Activated CD4-positive, alpha-beta memory T cell treated with anti-CD3 and anti-CD28 coated beads for 36 hours (primary cell): ENCODE measurements at regions of chr3 and their contacts with region 1.

Region 1: GRCh38 chr3:46629551-46630517 is 17.5 kb downstream of the FAM240A start:
- DNase-seq: peak; percentile 83
- H3K4me3 Mint-ChIP-seq: peak overlapping the region; percentile 40
- H3K27ac Mint-ChIP-seq: peak overlapping the region; percentile 31
- H3K4me1 Mint-ChIP-seq: peaks cover 18% of the 10 kb centered on the region
- H3K27me3 Mint-ChIP-seq: no peaks in the 10 kb centered on the region

Region 2: GRCh38 chr3:46449755-46450552 is 179.9 kb before region 1 on chr3:
- CTCF ChIA-PET with region 1: interaction called, 13 read pairs
- POLR2A ChIA-PET with region 1: no interaction called
- intact Hi-C with region 1: no loop called
- DNase-seq: no peak
- H3K4me3 Mint-ChIP-seq: no peak overlapping the region
- H3K27ac Mint-ChIP-seq: no peak overlapping the region
- H3K4me1 Mint-ChIP-seq: no peaks in the 10 kb centered on the region
- H3K27me3 Mint-ChIP-seq: peaks cover 3% of the 10 kb centered on the region

Region 3: GRCh38 chr3:46496741-46497554 is 132.9 kb before region 1 on chr3:
- CTCF ChIA-PET with region 1: interaction called, 21 read pairs
- POLR2A ChIA-PET with region 1: no interaction called
- intact Hi-C with region 1: no loop called
- DNase-seq: peak; percentile 62
- H3K4me3 Mint-ChIP-seq: no peak overlapping the region
- H3K27ac Mint-ChIP-seq: no peak overlapping the region
- H3K4me1 Mint-ChIP-seq: peaks cover 3% of the 10 kb centered on the region
- H3K27me3 Mint-ChIP-seq: no peaks in the 10 kb centered on the region

Region 4: DNA sequence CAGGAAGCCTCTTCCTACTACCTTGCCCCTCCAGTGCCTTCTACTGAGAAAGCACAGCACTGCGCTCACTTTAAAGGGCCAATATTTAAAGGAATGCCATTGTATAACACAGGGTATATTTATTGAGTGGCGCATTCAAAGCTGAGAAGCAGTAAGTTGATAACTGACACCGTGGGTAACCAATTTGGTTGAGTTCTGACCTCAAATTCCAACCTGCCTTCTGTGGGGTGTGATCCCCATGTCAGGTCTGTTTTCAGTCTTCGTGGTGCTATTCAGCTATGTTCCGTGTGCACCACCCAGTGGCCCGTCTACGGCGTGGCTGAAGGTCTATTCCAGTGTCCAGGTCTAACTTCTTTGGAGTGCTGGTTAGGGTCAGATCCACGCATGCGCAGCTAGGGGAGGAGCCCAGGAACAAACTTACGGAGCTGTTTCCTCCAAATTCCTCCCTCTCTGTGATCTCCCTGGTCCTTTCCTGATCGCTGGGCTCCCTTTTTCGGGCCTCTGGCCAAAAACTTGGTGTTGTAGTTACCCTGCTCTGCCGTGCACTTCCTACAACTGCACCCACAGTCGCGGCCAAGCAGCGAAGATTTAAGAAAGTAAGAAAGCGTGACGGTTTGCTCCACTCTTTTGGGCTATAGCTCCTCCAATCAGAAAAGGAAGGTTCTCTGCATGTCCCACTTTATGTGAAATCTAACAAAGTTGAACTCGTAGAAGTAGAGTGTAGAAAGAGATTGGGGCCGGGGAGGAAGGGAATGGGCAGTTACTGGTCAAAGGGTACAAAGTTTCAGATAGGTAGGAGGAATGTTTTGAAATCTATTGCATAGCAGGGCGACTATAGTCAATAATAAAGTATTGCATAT is 71.4 kb before region 1 on chr3:
- CTCF ChIA-PET with region 1: interaction called, 14 read pairs
- POLR2A ChIA-PET with region 1: no interaction called
- intact Hi-C with region 1: no loop called
- DNase-seq: peak; percentile 78
- H3K4me3 Mint-ChIP-seq: peak overlapping the region; percentile 71
- H3K27ac Mint-ChIP-seq: no peak overlapping the region
- H3K4me1 Mint-ChIP-seq: peaks cover 11% of the 10 kb centered on the region
- H3K27me3 Mint-ChIP-seq: peaks cover 1% of the 10 kb centered on the region

Region 5: DNA sequence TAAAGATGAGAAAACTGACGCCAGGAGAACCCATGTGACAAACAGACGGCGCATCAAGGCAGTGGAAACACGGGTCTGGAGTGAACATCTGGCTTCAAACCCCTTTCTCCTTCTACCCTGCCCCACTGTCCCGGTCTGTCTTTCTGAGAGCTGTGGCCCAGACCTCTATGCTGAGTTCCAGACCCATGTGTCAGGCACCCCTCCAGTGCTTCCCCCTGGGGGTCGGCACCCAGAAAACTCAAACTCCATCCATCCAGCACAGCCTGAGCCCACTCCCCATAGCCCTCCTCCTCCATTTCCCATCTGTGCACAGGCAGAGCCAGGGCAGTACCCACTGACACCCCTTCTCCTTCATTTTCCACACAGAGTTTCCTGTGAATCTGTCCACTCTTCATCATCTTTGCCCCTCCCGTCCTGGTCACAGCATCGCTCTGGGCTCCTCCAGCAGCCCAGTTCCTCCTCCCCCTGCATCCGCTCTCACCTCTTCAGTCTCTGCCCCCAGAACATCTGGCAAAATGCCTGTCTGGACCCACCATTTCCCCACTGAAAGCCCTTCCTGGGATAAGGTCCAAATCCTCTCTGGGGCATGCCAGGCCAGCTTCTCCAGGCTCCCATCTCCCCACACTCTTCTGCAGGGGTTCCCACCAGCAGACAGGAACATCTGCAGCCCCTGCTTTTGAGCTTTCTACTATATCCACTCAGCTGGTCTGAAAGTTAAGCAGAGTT is 14.6 kb before region 1 on chr3:
- CTCF ChIA-PET with region 1: interaction called, 10 read pairs
- POLR2A ChIA-PET with region 1: no interaction called
- intact Hi-C with region 1: no loop called
- DNase-seq: no peak
- H3K4me3 Mint-ChIP-seq: no peak overlapping the region
- H3K27ac Mint-ChIP-seq: no peak overlapping the region
- H3K4me1 Mint-ChIP-seq: no peaks in the 10 kb centered on the region
- H3K27me3 Mint-ChIP-seq: peaks cover 16% of the 10 kb centered on the region

Region 6: DNA sequence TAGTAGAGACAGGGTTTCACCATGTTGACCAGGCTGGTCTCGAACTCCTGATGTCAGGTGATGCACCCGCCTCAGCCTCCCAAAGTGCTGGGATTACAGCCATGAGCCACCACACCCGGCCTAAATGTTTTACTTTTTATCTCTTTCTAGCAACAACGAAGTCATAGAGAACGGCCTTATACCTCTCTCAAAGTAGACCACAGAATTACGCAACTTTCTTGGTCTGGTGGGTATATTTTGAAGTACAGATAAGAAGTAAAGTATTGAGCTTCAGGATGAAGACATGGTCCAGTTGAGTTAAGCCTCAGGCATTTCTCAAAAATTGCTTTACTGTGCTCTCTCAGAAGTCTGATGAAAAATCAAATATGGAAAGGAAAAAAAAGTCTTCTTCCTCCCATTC is 13.1 kb after region 1 on chr3:
- CTCF ChIA-PET with region 1: interaction called, 13 read pairs
- POLR2A ChIA-PET with region 1: no interaction called
- intact Hi-C with region 1: no loop called
- DNase-seq: no peak
- H3K4me3 Mint-ChIP-seq: no peak overlapping the region
- H3K27ac Mint-ChIP-seq: no peak overlapping the region
- H3K4me1 Mint-ChIP-seq: no peaks in the 10 kb centered on the region
- H3K27me3 Mint-ChIP-seq: peaks cover 27% of the 10 kb centered on the region